Lower leg skin (tissue), 4 donors: ENCODE measurements at regions of chr12 and their contacts with region 1.

Region 1: DNA sequence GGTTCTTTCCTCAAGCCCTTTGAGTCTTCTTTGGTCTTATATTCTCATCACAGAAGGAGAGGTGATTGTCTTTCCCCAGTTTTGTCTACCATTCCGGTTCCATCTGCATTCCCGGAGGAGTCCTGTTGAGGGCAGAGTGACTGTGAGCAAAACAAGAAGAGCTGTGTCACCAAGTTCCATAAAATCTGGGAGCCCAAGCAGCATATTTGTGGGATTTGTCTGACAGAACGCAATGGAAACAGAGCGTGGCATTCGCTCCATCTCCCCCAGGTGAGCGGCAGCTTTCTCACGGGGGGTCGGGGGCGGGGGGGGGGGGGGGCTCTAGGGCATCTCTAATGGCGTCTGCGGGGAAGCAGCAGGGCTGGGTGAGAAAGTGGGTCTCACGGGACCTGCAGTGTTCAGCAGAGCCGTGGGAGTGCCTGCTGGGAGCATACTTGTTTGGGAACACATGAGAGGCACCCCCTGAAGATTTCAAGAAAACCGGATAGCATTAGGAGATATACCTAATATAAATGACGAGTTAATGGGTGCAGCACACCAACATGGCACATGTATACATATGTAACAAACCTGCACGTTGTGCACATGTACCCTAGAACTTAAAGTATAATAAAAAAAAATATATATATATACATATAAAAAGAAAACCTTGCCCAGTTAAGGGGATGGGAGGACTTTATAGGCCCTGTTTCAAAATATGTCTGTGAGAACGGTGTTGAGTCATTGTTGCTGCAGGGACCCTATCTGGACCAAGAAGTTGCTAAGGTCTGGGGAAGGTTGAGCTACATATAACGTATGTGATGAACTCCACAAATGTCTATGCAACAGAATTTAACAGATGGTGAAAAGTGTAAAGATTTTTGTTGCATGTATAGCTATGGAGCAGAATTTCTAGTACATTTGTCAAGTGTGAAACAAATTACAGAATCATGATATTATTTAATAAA is 59.4 kb downstream of the TBC1D30 start:
- DNase-seq: no peak
- H3K4me3 ChIP-seq: no peak overlapping the region
- CTCF ChIP-seq: no peak
- POLR2A ChIP-seq: no peak

Region 2: GRCh38 chr12:64733857-64734256 is 150.0 kb before region 1 on chr12:
- intact Hi-C with region 1: no loop called
- DNase-seq: peak in 1 of 2 donors; percentile 53
- H3K4me3 ChIP-seq: no peak overlapping the region
- CTCF ChIP-seq: no peak
- POLR2A ChIP-seq: no peak

Region 3: GRCh38 chr12:64801381-64801780 is 82.5 kb before region 1 on chr12:
- intact Hi-C with region 1: loop called (anchors 5 kb)
- DNase-seq: no peak
- H3K4me3 ChIP-seq: no peak overlapping the region
- CTCF ChIP-seq: no peak
- POLR2A ChIP-seq: no peak